ENCODE measurements at regions of chr3 and their contacts with region 1.

Region 1: GRCh38 chr3:112642912-112643506 is 2.1 kb upstream of the CCDC80 start:
- DNase-seq: peak; percentile 92
- H3K4me3 Mint-ChIP-seq: peak overlapping the region; percentile 55
- H3K27ac Mint-ChIP-seq: no peak overlapping the region
- H3K4me1 Mint-ChIP-seq: peaks cover 14% of the 10 kb centered on the region
- H3K27me3 Mint-ChIP-seq: peaks cover 10% of the 10 kb centered on the region

Region 2: DNA sequence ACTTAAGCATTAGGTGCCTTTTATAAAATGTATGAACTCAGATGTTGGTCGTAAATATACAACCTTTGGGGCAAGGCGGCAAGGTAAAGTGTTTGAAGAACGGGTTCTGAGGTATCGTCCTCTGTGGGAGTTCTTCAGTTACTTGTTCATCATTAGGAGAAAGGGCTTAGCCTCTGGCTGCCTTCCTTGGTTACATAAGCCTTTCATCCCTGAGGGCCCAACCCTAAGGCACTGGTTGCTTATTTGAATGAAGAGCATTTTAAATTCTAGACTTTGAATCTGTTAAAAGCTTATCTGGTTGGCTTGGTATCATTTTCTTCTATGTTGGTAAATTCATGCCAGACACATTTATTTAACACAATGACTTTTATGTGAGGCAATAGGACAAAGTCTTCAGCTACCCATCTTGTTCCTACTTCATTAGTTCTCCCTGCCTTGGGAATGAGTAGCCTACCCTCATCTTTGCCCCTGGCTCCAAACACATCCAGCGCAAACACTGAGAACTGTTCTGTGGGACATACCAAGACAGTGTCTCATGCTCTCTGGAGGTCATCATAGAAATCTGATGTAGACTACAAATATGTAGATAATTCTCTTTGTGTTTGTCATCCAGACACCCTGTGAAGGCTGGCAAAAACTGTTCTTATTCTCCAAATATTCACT is 10.3 kb after region 1 on chr3:
- CTCF ChIA-PET with region 1: interaction called, 33 read pairs
- intact Hi-C with region 1: no loop called
- DNase-seq: no peak
- H3K4me3 Mint-ChIP-seq: no peak overlapping the region
- H3K27ac Mint-ChIP-seq: no peak overlapping the region
- H3K4me1 Mint-ChIP-seq: peaks cover 3% of the 10 kb centered on the region
- H3K27me3 Mint-ChIP-seq: no peaks in the 10 kb centered on the region

Region 3: DNA sequence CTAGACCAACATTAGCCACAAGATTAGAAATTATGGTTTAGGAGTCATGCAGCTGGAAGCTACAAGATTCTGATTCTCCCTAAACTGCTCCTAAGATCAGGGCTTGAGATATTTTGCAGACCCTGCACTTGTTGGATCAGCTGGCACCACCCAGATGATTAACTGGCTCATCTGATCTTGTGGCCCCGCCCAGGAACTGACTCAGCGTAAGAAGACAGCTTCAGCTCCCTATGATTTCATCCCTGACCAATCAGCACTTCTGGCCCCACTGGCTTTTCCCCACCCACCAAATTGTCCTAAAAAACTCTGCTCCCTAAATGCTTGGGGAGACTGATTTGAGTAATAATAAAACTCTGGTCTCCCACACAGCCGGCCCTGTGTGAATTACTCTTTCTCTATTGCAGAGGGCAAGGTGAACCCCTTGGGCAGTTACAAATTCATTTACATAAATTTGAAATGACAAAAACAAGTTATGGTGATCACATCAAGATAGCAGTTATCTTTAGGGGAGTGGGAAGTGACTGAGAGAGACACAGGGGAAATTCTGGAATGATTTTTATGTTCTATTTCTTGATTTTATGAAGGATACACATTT is 127.1 kb after region 1 on chr3:
- CTCF ChIA-PET with region 1: no interaction called
- intact Hi-C with region 1: no loop called
- DNase-seq: peak; percentile 57
- H3K4me3 Mint-ChIP-seq: no peak overlapping the region
- H3K27ac Mint-ChIP-seq: no peak overlapping the region
- H3K4me1 Mint-ChIP-seq: peaks cover 19% of the 10 kb centered on the region
- H3K27me3 Mint-ChIP-seq: no peaks in the 10 kb centered on the region

Region 4: GRCh38 chr3:112814266-112814665 is 171.3 kb after region 1 on chr3:
- CTCF ChIA-PET with region 1: interaction called, 17 read pairs
- intact Hi-C with region 1: loop called (anchors 1 kb)
- DNase-seq: no peak
- H3K4me3 Mint-ChIP-seq: no peak overlapping the region
- H3K27ac Mint-ChIP-seq: no peak overlapping the region
- H3K4me1 Mint-ChIP-seq: peaks cover 8% of the 10 kb centered on the region
- H3K27me3 Mint-ChIP-seq: no peaks in the 10 kb centered on the region

Region 5: GRCh38 chr3:112979240-112979832 is 336.3 kb after region 1 on chr3:
- CTCF ChIA-PET with region 1: interaction called, 41 read pairs
- intact Hi-C with region 1: loop called (anchors 1 kb)
- DNase-seq: no peak
- H3K4me3 Mint-ChIP-seq: no peak overlapping the region
- H3K27ac Mint-ChIP-seq: no peak overlapping the region
- H3K4me1 Mint-ChIP-seq: peaks cover 64% of the 10 kb centered on the region
- H3K27me3 Mint-ChIP-seq: no peaks in the 10 kb centered on the region

Region 6: GRCh38 chr3:113051302-113051711 is 408.3 kb after region 1 on chr3:
- CTCF ChIA-PET with region 1: no interaction called
- intact Hi-C with region 1: loop called (anchors 1 kb)
- DNase-seq: peak; percentile 96
- H3K4me3 Mint-ChIP-seq: no peak overlapping the region
- H3K27ac Mint-ChIP-seq: no peak overlapping the region
- H3K4me1 Mint-ChIP-seq: peaks cover 12% of the 10 kb centered on the region
- H3K27me3 Mint-ChIP-seq: no peaks in the 10 kb centered on the region

Measured in activated naive CD4-positive, alpha-beta T cell treated with anti-CD3 and anti-CD28 coated beads for 36 hours (primary cell).